H1 (cell line): ENCODE measurements at regions of chr10 and their contacts with region 1.

Region 1: DNA sequence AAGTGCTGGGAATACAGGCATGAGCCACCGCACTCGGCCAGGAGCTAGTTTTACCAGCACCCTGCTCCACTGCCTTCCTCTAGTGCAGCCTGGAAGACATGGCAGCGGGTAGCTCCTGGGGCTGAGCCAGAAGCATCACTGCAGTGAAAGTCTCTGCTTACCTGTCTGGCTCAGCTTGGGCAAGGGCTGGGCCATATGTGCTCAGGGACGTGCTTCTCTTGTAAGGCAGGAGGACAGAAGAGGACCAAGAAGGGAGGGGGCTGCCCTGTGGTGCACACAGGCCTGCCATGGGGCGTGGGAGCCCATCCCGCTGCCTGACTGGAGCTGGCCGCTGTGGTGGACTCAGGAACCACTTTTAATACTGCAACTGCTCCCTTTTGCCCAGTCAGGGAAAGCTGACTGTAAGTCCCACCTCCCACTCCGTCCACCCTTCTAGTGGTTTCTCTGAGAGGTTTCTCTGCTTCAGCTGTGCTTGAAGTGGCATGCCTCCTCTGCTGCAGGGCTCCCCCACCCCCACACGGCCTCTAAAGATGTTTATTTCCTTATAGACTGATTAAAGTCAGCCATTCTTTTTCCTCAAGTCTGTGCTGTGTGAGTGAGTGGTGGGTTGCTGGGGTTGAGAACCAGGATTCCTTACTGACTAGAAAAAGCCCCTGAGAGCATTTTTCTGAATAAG is 25.3 kb upstream of the C10orf95 start:
- DNase-seq: no peak
- H3K4me3 ChIP-seq: no peak overlapping the region
- H3K27ac ChIP-seq: no peak overlapping the region
- H3K4me1 ChIP-seq: no peaks in the 10 kb centered on the region
- H3K27me3 ChIP-seq: no peaks in the 10 kb centered on the region; a peak in 1 of 7 replicates
- CTCF ChIP-seq: no peak
- EP300 ChIP-seq: no peak
- POLR2A ChIP-seq: no peak
- RAD21 ChIP-seq: no peak

Region 2: GRCh38 chr10:102341038-102341688 is 135.4 kb before region 1 on chr10:
- CTCF ChIA-PET with region 1: no interaction called
- POLR2A ChIA-PET with region 1: no interaction called
- DNase-seq: no peak
- H3K4me3 ChIP-seq: no peak overlapping the region
- H3K27ac ChIP-seq: no peak overlapping the region
- H3K4me1 ChIP-seq: peaks cover 0 to 8% (median 4%) of the 10 kb centered on the region in 4 experiments; a peak in 5 of 7 replicates
- H3K27me3 ChIP-seq: peaks cover 25 to 50% (median 44%) of the 10 kb centered on the region in 4 experiments
- CTCF ChIP-seq: no peak
- EP300 ChIP-seq: no peak
- POLR2A ChIP-seq: no peak
- RAD21 ChIP-seq: no peak

Region 3: GRCh38 chr10:102394079-102394800 is 82.4 kb before region 1 on chr10:
- CTCF ChIA-PET with region 1: interaction called, 17 read pairs
- POLR2A ChIA-PET with region 1: interaction called, 3 read pairs
- DNase-seq: peak; percentile 65 to 96
- H3K4me3 ChIP-seq: peak overlapping the region; percentile 29 to 69 (median 55)
- H3K27ac ChIP-seq: peak overlapping the region; percentile 69; the same call in 1 of the 2 replicates
- H3K4me1 ChIP-seq: peaks cover 0 to 17% (median 9%) of the 10 kb centered on the region in 4 experiments; a peak in 6 of 7 replicates
- H3K27me3 ChIP-seq: peaks cover 0 to 22% (median 20%) of the 10 kb centered on the region in 4 experiments; a peak in 6 of 7 replicates
- CTCF ChIP-seq: peak in 1 of 3 experiments; percentile 96; a peak in 2 of 4 replicates
- EP300 ChIP-seq: peak in 1 of 2 experiments; percentile 89; a peak in 1 of 3 replicates
- POLR2A ChIP-seq: no peak; a peak in 1 of 3 replicates
- RAD21 ChIP-seq: peak; percentile 69 to 81

Region 4: DNA sequence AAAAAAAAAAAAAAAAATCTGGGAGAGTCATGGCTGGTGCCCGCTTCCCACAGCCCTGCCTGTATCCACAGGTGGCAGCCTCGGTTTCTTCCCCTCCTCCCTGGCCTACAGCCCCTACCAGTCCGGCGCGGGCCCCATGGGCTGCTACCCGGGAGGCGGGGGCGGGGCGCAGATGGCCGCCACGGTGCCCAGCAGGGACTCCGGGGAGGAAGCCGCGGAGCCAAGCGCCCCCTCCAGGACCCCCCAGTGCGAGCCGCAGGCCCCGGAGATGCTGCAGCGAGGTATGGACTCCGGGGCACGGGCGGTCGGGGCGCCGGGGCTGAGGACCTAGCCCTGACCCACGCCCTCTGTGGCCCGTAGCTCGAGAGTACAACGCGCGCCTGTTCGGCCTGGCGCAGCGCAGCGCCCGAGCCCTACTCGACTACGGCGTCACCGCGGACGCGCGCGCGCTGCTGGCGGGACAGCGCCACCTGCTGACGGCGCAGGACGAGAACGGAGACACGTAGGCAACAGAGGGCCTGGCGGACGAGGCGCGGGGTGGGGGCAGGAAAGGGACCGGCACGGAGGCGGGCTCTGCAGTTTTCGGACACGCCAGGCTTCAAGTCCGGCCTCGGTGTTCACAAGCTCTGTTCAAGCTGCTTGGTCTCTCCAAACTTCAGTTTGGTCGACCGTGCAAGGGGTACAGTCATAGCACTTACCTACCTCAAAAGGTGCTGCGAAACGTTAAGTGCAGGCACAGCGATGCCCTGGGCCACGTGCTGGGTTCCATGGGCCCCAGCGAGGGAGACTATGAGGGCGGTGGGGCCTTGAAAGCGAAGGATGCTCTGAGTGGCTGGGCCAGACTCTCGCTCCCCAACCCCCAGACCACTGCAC is 77.2 kb before region 1 on chr10:
- CTCF ChIA-PET with region 1: interaction called, 23 read pairs
- POLR2A ChIA-PET with region 1: interaction called, 3 read pairs
- DNase-seq: peak; percentile 70 to 96
- H3K4me3 ChIP-seq: peak overlapping the region; percentile 33 to 70 (median 60)
- H3K27ac ChIP-seq: no peak overlapping the region
- H3K4me1 ChIP-seq: peaks cover 0 to 22% (median 13%) of the 10 kb centered on the region in 4 experiments; a peak in 6 of 7 replicates
- H3K27me3 ChIP-seq: peaks cover 0 to 14% (median 10%) of the 10 kb centered on the region in 4 experiments; a peak in 6 of 7 replicates
- CTCF ChIP-seq: peak in 2 of 3 experiments; percentile 96; a peak in 3 of 4 replicates
- EP300 ChIP-seq: peak in 1 of 2 experiments; percentile 35; a peak in 1 of 3 replicates
- POLR2A ChIP-seq: peak in 1 of 2 experiments; percentile 73; a peak in 2 of 3 replicates
- RAD21 ChIP-seq: peak; percentile 63 to 75

Region 5: DNA sequence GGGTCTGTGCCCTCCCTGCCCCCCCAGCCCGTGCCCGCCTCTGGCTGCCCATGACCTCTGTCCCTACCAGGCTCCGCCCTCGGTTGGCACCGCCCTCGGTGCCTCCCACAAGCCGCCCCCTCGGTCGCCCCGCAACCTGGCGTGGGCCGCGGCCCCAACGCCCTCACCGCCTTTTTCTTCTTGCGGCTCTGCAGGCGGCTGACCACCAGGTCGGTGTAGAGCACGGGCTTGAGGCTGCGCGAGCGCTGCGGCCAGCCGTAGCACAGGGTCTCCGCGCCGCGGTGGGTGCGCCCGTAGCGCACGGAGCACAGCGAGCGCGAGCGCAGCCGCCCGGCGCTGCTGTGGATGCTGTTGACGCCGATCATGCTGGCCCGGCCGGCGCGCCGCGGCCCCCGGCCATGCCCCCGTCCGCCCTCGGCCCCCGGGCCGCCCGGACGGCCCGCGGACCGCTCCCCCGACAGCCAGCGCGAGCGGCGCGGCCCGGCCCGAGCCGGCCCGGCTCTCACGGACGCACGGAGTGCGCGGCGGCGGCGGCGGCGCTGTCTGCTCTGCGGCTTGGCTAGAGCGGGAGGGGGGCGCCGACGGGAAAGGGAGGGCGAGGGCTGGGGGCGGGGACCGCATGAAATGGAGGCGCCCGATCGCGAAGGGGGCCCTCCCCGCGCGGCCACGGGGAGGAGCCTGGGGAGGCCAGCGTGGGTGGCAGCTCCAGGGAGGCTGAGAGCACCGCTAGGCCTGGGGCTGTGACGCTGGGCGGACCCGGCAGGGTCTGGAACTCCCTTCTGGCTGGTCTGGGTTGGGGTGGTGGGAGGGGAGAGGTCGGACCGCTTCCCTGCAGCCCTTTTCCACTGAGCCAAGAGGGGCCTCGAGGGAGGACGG is 67.6 kb before region 1 on chr10:
- CTCF ChIA-PET with region 1: interaction called, 23 read pairs
- POLR2A ChIA-PET with region 1: interaction called, 4 read pairs
- DNase-seq: peak in 1 of 2 experiments; percentile 67
- H3K4me3 ChIP-seq: peak overlapping the region; percentile 55 to 70 (median 57)
- H3K27ac ChIP-seq: no peak overlapping the region
- H3K4me1 ChIP-seq: peaks cover 9 to 31% (median 22%) of the 10 kb centered on the region in 4 experiments
- H3K27me3 ChIP-seq: peaks cover 17 to 52% (median 50%) of the 10 kb centered on the region in 4 experiments
- CTCF ChIP-seq: peak in 1 of 3 experiments; percentile 6; a peak in 1 of 4 replicates
- EP300 ChIP-seq: no peak; a peak in 1 of 3 replicates
- POLR2A ChIP-seq: no peak
- RAD21 ChIP-seq: no peak; a peak in 1 of 4 replicates

Region 6: GRCh38 chr10:102426803-102427287 is 49.8 kb before region 1 on chr10:
- CTCF ChIA-PET with region 1: interaction called, 77 read pairs
- POLR2A ChIA-PET with region 1: interaction called, 11 read pairs
- DNase-seq: no peak
- H3K4me3 ChIP-seq: no peak overlapping the region
- H3K27ac ChIP-seq: no peak overlapping the region
- H3K4me1 ChIP-seq: peaks cover 0 to 18% (median 9%) of the 10 kb centered on the region in 4 experiments; a peak in 6 of 7 replicates
- H3K27me3 ChIP-seq: no peaks in the 10 kb centered on the region
- CTCF ChIP-seq: no peak
- EP300 ChIP-seq: no peak
- POLR2A ChIP-seq: no peak
- RAD21 ChIP-seq: no peak

Region 7: DNA sequence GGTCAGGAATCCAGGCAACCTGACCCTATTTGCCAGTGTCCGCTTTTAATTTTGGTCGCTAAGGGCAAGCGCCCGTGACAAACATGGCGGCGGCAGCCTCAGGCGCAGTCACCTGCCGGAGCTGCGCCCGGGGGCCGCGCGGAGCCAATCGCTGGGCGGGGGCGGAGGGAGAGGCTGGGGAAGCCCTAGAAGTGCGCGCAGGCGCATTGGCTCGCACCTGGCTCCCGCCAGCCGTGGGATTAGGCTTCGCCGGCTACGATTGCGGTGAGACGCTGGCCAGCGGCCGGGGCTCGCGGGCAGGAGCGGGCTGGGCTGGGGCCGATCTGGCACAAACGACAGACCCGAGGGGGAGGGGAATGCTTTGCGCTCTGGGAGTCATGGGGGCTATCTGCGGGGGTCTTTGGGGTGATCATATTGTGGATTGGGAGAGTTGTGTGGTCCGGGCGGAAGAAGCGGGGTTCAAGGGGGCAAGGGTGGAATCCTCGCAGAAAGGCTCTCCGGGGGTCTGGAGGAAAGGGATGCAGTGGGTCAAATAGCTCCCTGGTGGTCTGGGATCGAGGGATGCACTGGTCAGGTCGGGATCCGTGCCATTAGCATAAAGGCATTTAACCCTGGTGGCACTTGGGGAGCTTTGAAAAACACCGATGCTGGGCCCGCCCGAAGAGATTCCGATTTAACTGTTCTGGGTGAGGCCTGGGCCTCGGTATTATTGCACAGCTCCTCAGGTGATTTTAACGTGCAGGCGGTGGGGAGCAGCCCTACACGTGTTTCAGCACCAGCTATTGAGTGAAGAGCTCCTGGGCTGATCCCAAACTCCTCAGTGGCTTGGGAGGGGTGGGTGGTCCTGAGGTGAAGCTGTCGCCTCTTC is 15.2 kb before region 1 on chr10:
- CTCF ChIA-PET with region 1: interaction called, 30 read pairs
- POLR2A ChIA-PET with region 1: interaction called, 8 read pairs
- DNase-seq: peak; percentile 75 to 98
- H3K4me3 ChIP-seq: peak overlapping the region; percentile 50 to 75 (median 67)
- H3K27ac ChIP-seq: peak overlapping the region; percentile 51; the same call in 1 of the 2 replicates
- H3K4me1 ChIP-seq: peaks cover 8 to 24% (median 14%) of the 10 kb centered on the region in 4 experiments
- H3K27me3 ChIP-seq: peaks cover 0 to 5% (median 0%) of the 10 kb centered on the region in 4 experiments; a peak in 1 of 7 replicates
- CTCF ChIP-seq: no peak
- EP300 ChIP-seq: peak in 1 of 2 experiments; percentile 16; a peak in 1 of 3 replicates
- POLR2A ChIP-seq: peak in 1 of 2 experiments; percentile 71; a peak in 2 of 3 replicates
- RAD21 ChIP-seq: no peak

Region 8: GRCh38 chr10:102583435-102584417 is 107.1 kb after region 1 on chr10:
- CTCF ChIA-PET with region 1: interaction called, 66 read pairs
- POLR2A ChIA-PET with region 1: no interaction called
- DNase-seq: peak; percentile 59 to 89
- H3K4me3 ChIP-seq: no peak overlapping the region
- H3K27ac ChIP-seq: no peak overlapping the region
- H3K4me1 ChIP-seq: peaks cover 0 to 7% (median 5%) of the 10 kb centered on the region in 4 experiments; a peak in 4 of 7 replicates
- H3K27me3 ChIP-seq: no peaks in the 10 kb centered on the region
- CTCF ChIP-seq: peak; percentile 88 to 93 (median 90)
- EP300 ChIP-seq: no peak
- POLR2A ChIP-seq: no peak
- RAD21 ChIP-seq: peak; percentile 93 to 95